KBM-7 (cell line): ENCODE measurements at regions of chr11 and their contacts with region 1.

Region 1: DNA sequence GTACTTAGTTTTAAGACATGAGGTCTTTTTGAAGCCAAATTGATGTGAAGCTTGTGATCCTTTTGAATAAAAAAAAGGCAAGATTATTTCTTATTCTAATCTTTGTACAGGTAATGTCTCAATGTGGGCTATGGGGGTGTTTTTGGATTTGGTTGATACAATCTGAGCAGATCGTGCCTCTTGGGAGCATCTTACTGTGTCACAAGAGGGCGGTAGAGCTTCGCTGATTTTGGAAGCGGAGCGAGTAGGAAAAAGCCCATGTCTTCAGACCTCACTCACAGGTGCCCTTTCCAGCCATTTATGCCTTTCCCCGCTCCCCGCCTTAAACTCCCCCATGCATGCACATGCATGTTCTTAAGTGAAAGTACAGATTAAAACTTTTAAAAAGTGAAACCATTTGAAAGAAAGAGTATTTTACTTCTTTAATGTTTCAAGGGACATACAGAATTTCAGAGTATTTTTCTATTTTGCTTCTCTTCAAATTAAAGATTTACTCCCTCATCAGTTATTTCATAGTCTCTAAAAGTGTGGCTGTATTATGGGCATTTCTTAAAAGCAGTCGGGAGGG is 18.8 kb downstream of the DDX25 start:
- DNase-seq: peak; percentile 68

Region 2: DNA sequence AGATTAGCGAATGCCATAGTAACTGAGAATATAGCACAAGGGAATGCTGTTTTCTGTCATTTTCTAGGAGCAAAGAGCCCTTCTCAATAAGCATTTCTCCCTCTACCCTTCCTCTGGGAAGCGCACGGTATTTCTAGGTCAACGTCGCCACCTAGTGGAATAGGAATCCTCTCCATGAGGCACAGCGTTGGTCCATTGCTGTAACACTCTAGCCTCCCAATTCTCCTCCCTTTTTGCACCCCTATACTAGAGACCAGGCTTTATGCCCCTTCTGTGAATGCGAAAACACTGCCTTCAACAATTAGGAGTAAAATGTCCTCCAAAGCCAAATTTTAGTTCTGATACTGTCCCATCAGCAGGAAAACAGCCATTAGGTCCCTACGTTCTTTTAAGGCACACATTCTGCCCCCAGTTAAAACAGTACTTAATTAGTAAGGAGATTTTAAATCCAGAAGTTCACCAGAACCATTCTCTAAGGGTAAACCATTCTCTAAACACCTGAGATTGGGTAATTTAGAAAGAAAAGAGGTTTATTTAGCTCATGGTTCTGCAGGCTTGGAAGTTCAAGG is 48.5 kb before region 1 on chr11:
- in situ Hi-C with region 1: no loop called
- DNase-seq: peak; percentile 62

Region 3: DNA sequence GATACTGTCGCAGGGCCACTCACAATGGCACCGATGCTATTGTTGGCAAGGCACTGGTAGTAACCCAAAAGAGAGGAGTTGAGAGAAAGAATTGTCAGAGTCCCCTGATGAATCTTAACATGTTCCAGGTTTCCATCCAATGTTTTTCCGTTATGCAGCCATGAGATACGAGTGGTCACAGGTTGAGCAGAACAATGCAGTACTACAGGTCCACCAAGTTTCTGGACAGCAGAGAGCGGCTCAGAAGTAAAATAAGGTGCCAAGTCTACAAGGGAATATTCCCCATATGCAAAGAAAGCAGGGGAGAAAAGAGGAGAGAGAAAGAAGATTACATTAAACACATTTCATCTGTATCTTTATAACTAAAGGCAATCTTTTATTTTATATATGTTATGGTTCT is 98.2 kb after region 1 on chr11:
- in situ Hi-C with region 1: no loop called
- DNase-seq: no peak

Region 4: DNA sequence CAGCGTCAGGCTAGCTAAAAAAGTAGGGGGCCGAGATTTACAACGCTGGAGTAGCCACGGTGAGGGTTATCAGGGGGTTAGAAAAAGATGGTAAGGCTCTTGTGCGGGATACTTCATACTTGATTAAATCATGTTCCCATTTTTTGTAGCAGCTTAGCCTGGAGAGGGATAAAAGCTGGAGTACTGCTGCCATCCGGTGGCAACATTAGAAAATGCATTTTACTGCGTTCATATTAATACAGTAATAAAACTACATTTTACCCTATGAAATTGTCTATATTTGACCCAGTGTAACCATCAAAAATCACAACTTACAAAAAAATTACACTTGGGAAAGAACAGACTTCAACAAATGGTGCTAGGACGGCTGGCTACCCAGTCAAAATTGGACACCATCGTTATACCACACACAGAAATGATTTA is 271.0 kb after region 1 on chr11:
- in situ Hi-C with region 1: loop called (anchors 10 kb)
- DNase-seq: peak; percentile 58

Region 5: DNA sequence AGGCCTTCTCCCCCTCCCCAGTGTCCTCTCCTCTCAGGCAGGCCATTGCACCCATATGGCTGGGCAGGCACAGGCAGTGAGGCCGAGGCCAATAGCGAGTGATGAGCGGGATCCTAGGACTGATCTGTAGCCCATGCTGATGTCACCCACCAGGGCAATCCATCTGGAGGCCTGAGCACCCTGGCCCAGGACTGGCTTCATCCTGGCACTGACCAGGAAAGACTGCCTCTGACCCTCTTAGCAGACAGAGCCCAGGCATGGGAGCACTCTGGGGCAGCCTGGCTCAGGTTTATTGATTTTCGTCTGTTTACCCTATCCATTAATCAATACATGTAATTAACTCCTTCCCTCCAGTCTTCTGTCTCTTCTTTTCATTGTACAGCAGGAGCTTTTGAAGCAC is 354.7 kb after region 1 on chr11:
- in situ Hi-C with region 1: no loop called
- DNase-seq: no peak